ENCODE measurements at regions of chr19 and their contacts with region 1.

Region 1: DNA sequence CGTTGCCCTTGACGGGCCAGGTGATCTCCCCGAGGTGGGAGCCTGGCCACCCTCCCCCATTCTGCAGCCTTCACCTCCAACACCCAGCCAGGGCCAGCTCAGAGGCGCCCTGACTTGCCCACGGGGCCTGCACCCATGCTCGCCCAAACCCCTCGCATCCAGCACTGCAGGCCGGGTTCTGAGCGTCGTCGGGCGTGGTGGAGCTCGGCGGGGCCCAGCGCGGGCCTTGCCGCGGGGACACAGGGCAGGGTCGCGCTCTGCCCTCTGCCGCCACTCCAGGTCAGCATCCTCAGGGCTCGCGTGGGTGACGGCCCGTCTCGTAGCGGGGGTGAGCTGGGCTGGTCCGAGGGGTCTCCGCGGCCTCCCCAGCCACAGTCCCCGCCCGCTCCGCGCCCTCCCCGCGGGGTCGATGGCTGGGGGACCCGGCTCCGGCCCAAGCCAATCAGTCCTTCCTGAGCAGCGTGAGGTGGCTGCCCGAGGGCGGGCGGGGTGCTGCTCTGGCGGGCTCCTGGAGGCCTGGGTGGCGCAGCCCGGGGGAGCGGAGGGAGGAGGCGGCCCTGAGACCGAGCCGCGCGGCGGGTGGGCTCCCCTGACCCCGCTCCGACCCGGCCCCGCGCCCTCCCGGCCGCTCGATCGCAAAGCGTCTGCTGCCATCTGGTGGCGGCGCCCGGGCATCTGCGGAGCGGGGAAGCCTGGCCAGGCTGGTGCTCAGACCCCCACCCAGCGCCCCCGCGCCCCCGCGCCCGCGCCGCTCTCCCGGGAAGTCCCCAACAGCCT is 61.4 kb downstream of the CCNE1 start:
- DNase-seq: peak in 2 of 3 donors; percentile 68 to 69
- ATAC-seq: peak; percentile 76
- H3K4me3 ChIP-seq: no peak overlapping the region
- H3K4me1 ChIP-seq: peaks cover 5% of the 10 kb centered on the region
- CTCF ChIP-seq: peak; percentile 82

Region 2: GRCh38 chr19:29735800-29736199 is 137.4 kb before region 1 on chr19:
- intact Hi-C with region 1: loop called in 1 of 2 experiments (anchors 10 kb)
- DNase-seq: no peak
- ATAC-seq: no peak
- H3K4me3 ChIP-seq: no peak overlapping the region
- H3K4me1 ChIP-seq: no peaks in the 10 kb centered on the region
- CTCF ChIP-seq: no peak

Region 3: GRCh38 chr19:29761575-29762232 is 111.5 kb before region 1 on chr19:
- intact Hi-C with region 1: loop called (anchors 10 kb)
- DNase-seq: peak in 2 of 3 donors; percentile 23 to 49
- ATAC-seq: peak; percentile 60
- H3K4me3 ChIP-seq: no peak overlapping the region
- H3K4me1 ChIP-seq: no peaks in the 10 kb centered on the region
- CTCF ChIP-seq: no peak

Region 4: GRCh38 chr19:29819986-29820385 is 53.2 kb before region 1 on chr19:
- intact Hi-C with region 1: no loop called
- DNase-seq: no peak
- ATAC-seq: no peak
- H3K4me3 ChIP-seq: no peak overlapping the region
- H3K4me1 ChIP-seq: no peaks in the 10 kb centered on the region
- CTCF ChIP-seq: no peak

Measured in mucosa of descending colon (tissue), 3 donors.